ENCODE measurements at regions of chr2 and their contacts with region 1.

Region 1: GRCh38 chr2:22499082-22499839 is 885.7 kb upstream of the KLHL29 start:
- DNase-seq: peak in 1 of 5 donors; percentile 25
- H3K4me3 ChIP-seq: no peak overlapping the region
- H3K27ac ChIP-seq: no peak overlapping the region
- H3K4me1 ChIP-seq: peaks cover 3% of the 10 kb centered on the region
- H3K27me3 ChIP-seq: no peaks in the 10 kb centered on the region
- CTCF ChIP-seq: no peak
- EP300 ChIP-seq: peak; percentile 27
- POLR2A ChIP-seq: no peak

Region 2: GRCh38 chr2:22520369-22521288 is 21.4 kb after region 1 on chr2:
- intact Hi-C with region 1: loop called in 1 of 4 experiments (anchors 1 kb)
- DNase-seq: no peak
- H3K4me3 ChIP-seq: no peak overlapping the region
- H3K27ac ChIP-seq: no peak overlapping the region
- H3K4me1 ChIP-seq: no peaks in the 10 kb centered on the region
- H3K27me3 ChIP-seq: no peaks in the 10 kb centered on the region
- CTCF ChIP-seq: no peak
- EP300 ChIP-seq: no peak
- POLR2A ChIP-seq: no peak

Region 3: GRCh38 chr2:22904126-22904684 is 404.9 kb after region 1 on chr2:
- intact Hi-C with region 1: no loop called
- DNase-seq: peak in 1 of 5 donors; percentile 33
- H3K4me3 ChIP-seq: no peak overlapping the region
- H3K27ac ChIP-seq: no peak overlapping the region
- H3K4me1 ChIP-seq: no peaks in the 10 kb centered on the region
- H3K27me3 ChIP-seq: no peaks in the 10 kb centered on the region
- CTCF ChIP-seq: no peak
- EP300 ChIP-seq: no peak
- POLR2A ChIP-seq: no peak

Measured in ovary (tissue), 10 donors.